ENCODE measurements at regions of chr15 and their contacts with region 1.

Region 1: GRCh38 chr15:74842581-74843444 is at the start of gene ULK3:
- DNase-seq: peak; percentile 93
- H3K4me3 Mint-ChIP-seq: peak within 1 kb of the TSS; percentile 86
- H3K27ac Mint-ChIP-seq: peak within 1 kb of the TSS; percentile 89
- H3K4me1 Mint-ChIP-seq: peaks cover 44% of the 10 kb centered on the region
- H3K27me3 Mint-ChIP-seq: no peaks in the 10 kb centered on the region
- total RNA-seq, gene ULK3: 58.9 to 69.2 TPM

Region 2: DNA sequence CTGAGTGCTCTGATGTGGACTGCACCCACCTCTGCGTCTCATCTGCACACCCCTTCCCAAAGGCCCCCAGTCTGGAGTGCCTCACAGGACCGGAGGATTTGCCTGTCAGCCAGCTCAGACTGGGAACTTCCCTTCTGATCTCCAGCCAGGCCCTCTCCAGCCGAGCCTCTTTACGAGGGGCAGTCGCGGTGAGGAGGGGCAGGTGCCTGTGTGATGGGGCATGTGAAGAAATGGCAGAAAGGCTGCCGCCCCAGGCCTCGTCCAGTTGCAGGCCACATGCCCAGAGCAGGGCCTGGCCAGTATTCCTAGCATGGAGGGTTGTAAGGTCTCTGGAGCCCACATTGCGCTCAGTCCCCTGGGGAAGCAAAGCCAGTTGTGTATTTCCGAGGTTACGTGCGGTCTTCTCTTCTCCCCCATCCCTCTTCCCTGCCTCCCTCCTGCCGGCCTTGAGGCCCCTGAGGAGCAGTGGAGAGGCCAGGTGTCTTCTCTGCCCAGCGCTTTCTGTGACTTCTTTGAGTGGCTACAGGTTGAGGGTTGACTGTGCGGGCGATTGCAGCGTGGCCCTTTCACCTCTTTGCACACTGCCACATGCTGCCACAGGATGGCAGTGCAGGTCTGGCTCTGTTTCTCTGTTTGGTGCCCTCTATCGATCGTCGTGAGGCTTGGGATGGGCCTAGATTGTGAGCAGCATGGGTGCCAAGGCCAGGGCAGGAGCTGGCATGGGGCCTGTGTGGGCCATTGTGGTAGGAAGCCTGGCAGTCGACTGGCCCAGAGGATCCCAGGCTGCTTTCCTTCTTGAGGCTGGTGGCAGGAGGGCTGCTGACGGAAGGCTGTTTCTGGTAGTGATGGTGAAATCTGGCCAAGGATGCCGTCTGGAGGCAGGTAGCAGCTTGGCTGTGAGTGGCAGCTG is 221.9 kb before region 1 on chr15:
- CTCF ChIA-PET with region 1: no interaction called
- intact Hi-C with region 1: no loop called
- DNase-seq: peak; percentile 88
- H3K4me3 Mint-ChIP-seq: no peak overlapping the region
- H3K27ac Mint-ChIP-seq: peak overlapping the region; percentile 79
- H3K4me1 Mint-ChIP-seq: peaks cover 53% of the 10 kb centered on the region
- H3K27me3 Mint-ChIP-seq: no peaks in the 10 kb centered on the region

Region 3: DNA sequence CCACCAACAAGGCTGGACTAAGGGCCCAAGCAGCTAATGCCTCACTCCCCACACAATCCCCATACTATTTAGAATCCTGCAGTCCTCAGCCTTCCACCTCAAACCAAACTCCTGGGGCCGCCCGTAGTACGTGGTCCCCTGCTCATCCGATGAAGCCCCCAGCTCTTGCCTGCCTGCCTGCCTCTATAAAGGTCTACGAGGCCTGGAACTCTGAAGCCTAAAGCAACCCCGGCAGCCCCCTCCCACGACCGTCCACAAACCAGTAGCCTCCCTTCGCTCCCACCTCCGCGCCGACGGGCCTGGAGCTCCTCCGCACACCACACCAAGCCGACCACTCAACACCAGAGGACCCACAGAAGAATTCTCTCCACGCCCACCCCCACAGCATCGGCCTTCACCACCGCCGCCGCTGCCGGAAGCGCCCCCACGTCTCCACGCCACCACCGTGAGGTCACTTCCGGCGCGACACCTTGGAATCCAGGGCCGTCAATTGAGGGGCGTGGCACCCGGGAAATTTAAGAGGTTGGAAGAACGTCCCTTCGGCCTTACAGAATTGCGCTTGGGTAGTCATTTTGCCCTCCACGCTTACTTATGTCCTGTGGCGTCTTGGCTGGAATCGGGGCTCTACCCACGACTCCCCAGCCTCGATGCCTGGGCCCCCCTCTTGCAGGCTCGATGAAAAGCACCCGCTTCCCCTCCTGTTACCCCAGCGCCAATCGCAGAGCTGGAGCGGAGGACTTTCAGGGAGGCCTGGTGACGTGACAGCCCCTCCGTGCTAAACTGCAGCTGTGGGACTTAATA is 147.0 kb before region 1 on chr15 and contains the start of gene EDC3:
- CTCF ChIA-PET with region 1: no interaction called
- intact Hi-C with region 1: loop called (anchors 5 kb)
- DNase-seq: peak; percentile 89
- H3K4me3 Mint-ChIP-seq: peak within 1 kb of the TSS; percentile 100
- H3K27ac Mint-ChIP-seq: peak within 1 kb of the TSS; percentile 98
- H3K4me1 Mint-ChIP-seq: peaks cover 40% of the 10 kb centered on the region
- H3K27me3 Mint-ChIP-seq: no peaks in the 10 kb centered on the region
- total RNA-seq, gene EDC3: 33.8 to 37.8 TPM

Region 4: GRCh38 chr15:74716644-74717043 is 126.2 kb before region 1 on chr15:
- CTCF ChIA-PET with region 1: no interaction called
- intact Hi-C with region 1: no loop called
- DNase-seq: no peak
- H3K4me3 Mint-ChIP-seq: no peak overlapping the region
- H3K27ac Mint-ChIP-seq: no peak overlapping the region
- H3K4me1 Mint-ChIP-seq: no peaks in the 10 kb centered on the region
- H3K27me3 Mint-ChIP-seq: no peaks in the 10 kb centered on the region

Region 5: GRCh38 chr15:74787251-74788041 is 55.4 kb before region 1 on chr15:
- CTCF ChIA-PET with region 1: interaction called, 10 read pairs
- intact Hi-C with region 1: no loop called
- DNase-seq: peak; percentile 98
- H3K4me3 Mint-ChIP-seq: peak overlapping the region; percentile 93
- H3K27ac Mint-ChIP-seq: peak overlapping the region; percentile 99
- H3K4me1 Mint-ChIP-seq: peaks cover 55% of the 10 kb centered on the region
- H3K27me3 Mint-ChIP-seq: no peaks in the 10 kb centered on the region

Region 6: DNA sequence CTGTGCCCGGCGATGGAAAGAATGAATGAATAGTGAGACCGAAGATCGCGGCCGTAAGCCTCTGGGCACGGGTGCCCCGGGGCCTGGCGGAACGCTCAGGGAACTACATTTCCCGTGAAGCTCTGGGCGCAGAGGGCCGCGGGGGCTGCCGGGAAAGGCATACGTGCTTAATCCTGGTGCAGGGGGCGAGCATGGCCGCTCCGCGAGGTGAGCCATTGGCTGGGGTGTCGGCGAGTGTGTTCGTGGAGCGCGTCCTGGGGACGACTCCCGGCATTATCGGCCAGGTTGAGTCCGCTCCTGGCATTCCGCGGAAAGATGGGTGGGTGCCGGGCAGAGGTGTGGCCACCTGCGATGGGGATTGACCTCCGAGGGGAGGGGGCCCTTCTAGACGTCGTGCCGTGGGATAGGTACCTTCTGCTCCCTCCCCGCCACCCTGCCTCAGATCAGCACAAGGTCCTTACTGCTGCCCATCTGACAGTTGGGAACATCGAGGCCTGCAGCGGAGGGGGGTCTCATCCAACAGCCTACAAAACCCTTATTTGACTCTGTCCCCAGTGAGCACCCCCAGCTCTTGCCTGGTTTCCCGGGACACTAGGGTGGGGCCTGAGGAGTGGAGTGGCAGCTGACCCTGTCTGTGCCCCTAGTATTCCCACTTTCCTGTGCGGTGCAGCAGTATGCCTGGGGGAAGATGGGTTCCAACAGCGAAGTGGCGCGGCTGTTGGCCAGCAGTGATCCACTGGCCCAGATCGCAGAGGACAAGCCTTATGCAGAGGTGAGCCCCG is 47.3 kb after region 1 on chr15 and contains the start of gene MPI:
- CTCF ChIA-PET with region 1: interaction called, 4 read pairs
- intact Hi-C with region 1: loop called (anchors 1 kb)
- DNase-seq: peak; percentile 93
- H3K4me3 Mint-ChIP-seq: peak within 1 kb of the TSS; percentile 94
- H3K27ac Mint-ChIP-seq: peak within 1 kb of the TSS; percentile 92
- H3K4me1 Mint-ChIP-seq: peaks cover 43% of the 10 kb centered on the region
- H3K27me3 Mint-ChIP-seq: no peaks in the 10 kb centered on the region
- total RNA-seq, gene MPI: 55.2 to 56.1 TPM

Region 7: GRCh38 chr15:74950078-74951000 is 107.5 kb after region 1 on chr15:
- CTCF ChIA-PET with region 1: interaction called, 4 read pairs
- intact Hi-C with region 1: loop called (anchors 2 kb)
- DNase-seq: peak; percentile 92
- H3K4me3 Mint-ChIP-seq: no peak overlapping the region
- H3K27ac Mint-ChIP-seq: no peak overlapping the region
- H3K4me1 Mint-ChIP-seq: peaks cover 10% of the 10 kb centered on the region
- H3K27me3 Mint-ChIP-seq: no peaks in the 10 kb centered on the region

Measured in activated naive CD4-positive, alpha-beta T cell treated with anti-CD3 and anti-CD28 coated beads for 36 hours (primary cell).